ENCODE measurements at regions of chr1 and their contacts with region 1.

Region 1: DNA sequence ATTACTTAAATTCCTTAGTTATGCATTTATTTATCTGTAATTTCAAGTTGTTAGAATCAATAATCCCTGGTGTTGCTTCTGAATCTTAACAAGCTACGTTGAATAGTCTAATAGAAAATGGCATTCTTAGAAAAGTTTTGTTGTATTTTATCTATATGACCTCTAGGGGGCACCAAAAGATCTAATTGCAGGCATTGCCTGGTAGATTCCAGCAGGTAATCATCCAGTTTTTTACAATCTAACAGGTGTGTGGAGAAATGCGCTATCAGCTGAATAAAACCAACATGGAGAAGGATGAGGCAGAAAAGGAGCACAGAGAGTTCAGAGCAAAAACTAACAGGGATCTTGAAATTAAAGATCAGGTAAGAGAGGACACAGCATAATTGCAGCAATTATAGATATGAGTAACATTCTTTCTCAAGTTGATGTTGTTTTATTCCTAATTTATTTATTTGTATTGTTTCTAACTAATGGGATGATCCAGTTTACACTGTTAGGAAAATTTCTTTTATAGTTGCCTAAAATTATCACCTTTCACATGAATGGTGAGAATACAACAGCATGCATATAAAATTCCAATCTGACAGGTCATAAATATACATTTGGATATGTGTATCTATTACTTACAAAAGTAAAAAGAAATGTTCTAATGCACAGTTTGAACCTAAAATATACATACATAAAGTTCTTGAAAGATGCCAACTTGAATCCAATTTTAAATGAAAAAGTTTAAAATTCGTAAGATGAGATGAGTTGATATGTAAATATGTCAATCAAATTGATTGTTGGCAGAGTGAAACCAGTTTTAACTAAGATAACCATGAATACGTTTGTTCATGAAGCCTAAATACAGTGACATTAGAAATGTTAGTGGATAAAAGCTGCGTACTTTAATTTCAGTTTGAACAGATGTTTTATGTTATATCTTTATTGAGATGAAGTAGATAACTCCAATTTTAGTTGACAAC is 88.4 kb downstream of the SDCCAG8 start:
- DNase-seq: no peak
- H3K4me3 ChIP-seq: no peak overlapping the region
- H3K27ac ChIP-seq: no peak overlapping the region
- H3K4me1 ChIP-seq: peaks cover 0 to 6% (median 1%) of the 10 kb centered on the region in 4 donors
- H3K27me3 ChIP-seq: no peaks in the 10 kb centered on the region
- CTCF ChIP-seq: peak; percentile 65 to 75 (median 73)
- EP300 ChIP-seq: no peak
- POLR2A ChIP-seq: no peak

Region 2: DNA sequence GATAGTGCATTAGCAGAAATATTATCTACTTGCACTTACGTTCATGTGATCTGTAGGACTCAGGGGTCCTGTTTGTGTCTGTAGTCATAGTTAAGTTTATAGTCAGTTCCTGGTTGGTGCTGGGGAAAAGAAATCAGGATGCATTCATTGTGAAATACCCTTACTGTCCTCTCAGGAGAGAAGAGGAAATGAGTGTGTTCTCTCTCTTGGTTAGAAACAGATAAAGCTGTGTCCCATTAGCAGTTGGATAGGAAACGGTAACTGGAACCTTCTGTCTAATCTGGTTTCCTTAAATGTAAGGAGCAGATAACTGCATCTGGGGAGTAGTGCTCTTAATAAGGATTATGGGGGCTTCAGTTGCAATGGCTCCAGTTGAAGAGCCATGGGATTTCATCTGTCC is 79.5 kb before region 1 on chr1:
- in situ Hi-C with region 1: no loop called
- intact Hi-C with region 1: no loop called
- DNase-seq: no peak
- H3K4me3 ChIP-seq: no peak overlapping the region
- H3K27ac ChIP-seq: peak overlapping the region in 3 of 4 donors; percentile 12 to 33 (median 16)
- H3K4me1 ChIP-seq: peaks cover 0 to 12% (median 0%) of the 10 kb centered on the region in 4 donors
- H3K27me3 ChIP-seq: no peaks in the 10 kb centered on the region
- CTCF ChIP-seq: no peak
- EP300 ChIP-seq: no peak
- POLR2A ChIP-seq: no peak

Region 3: DNA sequence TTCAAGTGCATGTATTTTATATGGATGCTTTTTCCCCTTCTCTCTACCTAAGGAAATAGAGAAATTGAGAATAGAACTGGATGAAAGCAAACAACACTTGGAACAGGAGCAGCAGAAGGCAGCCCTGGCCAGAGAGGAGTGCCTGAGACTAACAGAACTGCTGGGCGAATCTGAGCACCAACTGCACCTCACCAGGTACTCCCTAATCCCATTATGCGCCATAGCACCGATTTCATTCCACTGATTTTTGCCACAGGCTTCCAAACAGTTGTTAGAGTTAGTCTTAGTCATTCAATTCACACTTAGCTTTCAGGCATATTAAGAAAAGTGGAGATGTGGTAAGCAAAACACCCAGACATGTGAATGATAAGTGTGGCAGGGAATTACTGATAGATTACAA is 34.4 kb after region 1 on chr1:
- in situ Hi-C with region 1: no loop called
- intact Hi-C with region 1: no loop called
- DNase-seq: no peak
- H3K4me3 ChIP-seq: no peak overlapping the region
- H3K27ac ChIP-seq: no peak overlapping the region
- H3K4me1 ChIP-seq: no peaks in the 10 kb centered on the region
- H3K27me3 ChIP-seq: no peaks in the 10 kb centered on the region
- CTCF ChIP-seq: no peak
- EP300 ChIP-seq: no peak
- POLR2A ChIP-seq: no peak

Region 4: GRCh38 chr1:243409284-243409683 is 65.0 kb after region 1 on chr1:
- in situ Hi-C with region 1: no loop called
- intact Hi-C with region 1: no loop called
- DNase-seq: no peak
- H3K4me3 ChIP-seq: no peak overlapping the region
- H3K27ac ChIP-seq: no peak overlapping the region
- H3K4me1 ChIP-seq: no peaks in the 10 kb centered on the region
- H3K27me3 ChIP-seq: no peaks in the 10 kb centered on the region
- CTCF ChIP-seq: no peak
- EP300 ChIP-seq: no peak
- POLR2A ChIP-seq: no peak

Region 5: GRCh38 chr1:243748706-243749283 is 404.5 kb after region 1 on chr1:
- in situ Hi-C with region 1: loop called in 3 of 4 experiments (anchors 10 to 25 kb)
- intact Hi-C with region 1: loop called (anchors 10 kb)
- DNase-seq: no peak
- H3K4me3 ChIP-seq: no peak overlapping the region
- H3K27ac ChIP-seq: no peak overlapping the region
- H3K4me1 ChIP-seq: peaks cover 0 to 6% (median 0%) of the 10 kb centered on the region in 4 donors
- H3K27me3 ChIP-seq: no peaks in the 10 kb centered on the region
- CTCF ChIP-seq: peak; percentile 62 to 82 (median 68)
- EP300 ChIP-seq: no peak
- POLR2A ChIP-seq: no peak

Region 6: DNA sequence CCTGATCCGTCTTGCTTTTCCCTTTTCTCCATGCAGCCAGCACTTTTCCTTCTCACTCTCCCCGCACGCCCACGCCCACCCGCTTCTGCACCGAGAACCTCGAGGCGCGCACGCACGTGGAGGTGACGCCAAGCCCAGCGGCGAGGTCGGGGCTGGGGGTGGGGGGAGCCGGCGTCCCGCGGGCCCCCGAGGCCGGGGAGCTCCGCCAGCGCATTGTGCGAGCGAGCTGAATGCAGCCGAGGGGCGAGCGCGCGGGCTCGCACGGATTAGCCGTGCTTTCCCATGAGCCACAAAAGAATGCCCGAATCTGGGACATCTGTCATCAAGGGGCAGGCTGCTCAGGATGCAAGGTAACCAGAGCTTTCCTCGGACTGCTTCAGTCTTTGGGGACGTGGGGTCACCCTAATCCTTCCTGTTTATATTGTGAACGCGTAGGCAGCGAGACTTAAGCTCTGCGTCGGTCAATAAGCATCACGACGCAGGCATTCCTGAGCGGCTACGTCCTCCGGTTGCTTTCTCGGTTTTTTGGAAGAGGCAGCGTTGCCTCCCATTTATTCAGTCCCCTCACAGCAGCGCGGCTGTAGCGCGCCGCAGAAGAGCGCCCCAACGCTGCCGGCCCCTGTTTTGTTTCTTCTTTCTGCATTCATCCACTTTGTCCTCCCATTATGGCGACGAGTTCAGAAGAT is 573.1 kb after region 1 on chr1:
- in situ Hi-C with region 1: no loop called
- intact Hi-C with region 1: no loop called
- DNase-seq: peak; percentile 15
- H3K4me3 ChIP-seq: peak overlapping the region; percentile 1 to 39 (median 28)
- H3K27ac ChIP-seq: peak overlapping the region in 2 of 4 donors; percentile 13 to 20
- H3K4me1 ChIP-seq: peaks cover 6 to 12% (median 9%) of the 10 kb centered on the region in 4 donors
- H3K27me3 ChIP-seq: peaks cover 23% of the 10 kb centered on the region
- CTCF ChIP-seq: no peak
- EP300 ChIP-seq: no peak
- POLR2A ChIP-seq: peak; percentile 27

Region 7: DNA sequence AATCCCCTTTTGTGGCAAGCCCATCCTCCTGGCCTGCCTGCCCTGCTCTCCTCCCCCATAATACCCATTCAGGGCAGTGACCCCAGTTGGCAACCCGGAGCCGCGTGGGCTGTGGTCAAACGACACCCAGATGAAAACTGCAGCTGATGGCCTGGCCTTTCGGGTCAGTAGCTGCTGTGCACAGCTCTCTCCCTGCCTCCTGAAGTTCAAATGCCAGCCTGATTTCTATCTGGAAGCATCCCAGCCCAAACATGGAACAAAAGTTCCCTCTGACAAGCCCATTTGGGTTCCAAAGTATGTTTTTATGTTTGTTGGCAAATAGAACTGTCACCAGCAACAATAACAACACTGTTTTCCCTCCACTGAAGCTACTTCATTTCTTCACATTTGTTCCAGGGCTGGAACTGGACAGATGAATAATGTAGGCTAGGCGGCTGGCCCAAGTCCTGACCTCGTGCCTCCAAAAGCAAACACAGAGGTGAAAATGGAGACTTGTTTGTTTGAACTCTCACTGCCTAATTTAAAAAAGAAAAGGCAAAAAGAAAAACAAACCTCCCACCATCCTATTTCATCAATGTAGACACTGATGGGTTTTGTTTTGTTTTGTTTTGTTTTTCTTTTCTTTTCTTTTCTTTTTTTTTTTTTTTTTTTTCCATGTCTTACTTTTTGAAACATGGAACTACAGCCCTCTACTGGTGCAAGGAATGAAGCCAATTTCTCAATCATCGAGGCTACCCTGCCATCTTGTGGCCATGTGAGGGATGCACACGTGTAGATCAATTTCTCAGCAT is 928.4 kb after region 1 on chr1:
- in situ Hi-C with region 1: loop called in 3 of 4 experiments (anchors 5 to 25 kb)
- intact Hi-C with region 1: loop called (anchors 5 kb)
- DNase-seq: peak; percentile 71
- H3K4me3 ChIP-seq: no peak overlapping the region
- H3K27ac ChIP-seq: peak overlapping the region; percentile 56 to 77 (median 66)
- H3K4me1 ChIP-seq: peaks cover 0 to 9% (median 3%) of the 10 kb centered on the region in 4 donors
- H3K27me3 ChIP-seq: no peaks in the 10 kb centered on the region
- CTCF ChIP-seq: peak; percentile 86 to 98 (median 93)
- EP300 ChIP-seq: no peak
- POLR2A ChIP-seq: no peak

Region 8: DNA sequence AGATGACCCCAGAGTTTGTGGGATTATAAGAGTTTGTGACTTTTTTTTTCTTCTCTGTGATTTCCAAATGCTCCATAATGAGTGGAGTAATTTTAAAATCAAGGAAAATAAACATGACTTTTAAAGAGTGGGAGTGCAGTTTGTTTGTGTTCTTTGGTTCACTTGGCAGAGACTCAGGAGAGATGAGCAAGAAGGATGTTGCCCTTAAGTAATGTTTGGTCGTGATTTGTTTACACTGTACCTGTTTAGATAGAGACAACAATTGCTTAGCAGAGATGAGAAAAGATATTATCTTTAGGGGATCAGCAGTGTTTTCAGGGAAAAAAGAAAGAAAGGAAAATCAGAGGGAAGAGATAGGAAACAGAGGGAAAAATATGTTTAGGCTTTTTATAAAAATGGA is 936.6 kb after region 1 on chr1:
- in situ Hi-C with region 1: loop called in 3 of 4 experiments (anchors 5 to 25 kb)
- intact Hi-C with region 1: no loop called
- DNase-seq: no peak
- H3K4me3 ChIP-seq: no peak overlapping the region
- H3K27ac ChIP-seq: no peak overlapping the region
- H3K4me1 ChIP-seq: no peaks in the 10 kb centered on the region
- H3K27me3 ChIP-seq: no peaks in the 10 kb centered on the region
- CTCF ChIP-seq: no peak
- EP300 ChIP-seq: no peak
- POLR2A ChIP-seq: no peak

Measured in transverse colon (tissue), 4 donors.